OCI-LY7 (cell line): ENCODE measurements at regions of chr4 and their contacts with region 1.

Region 1: GRCh38 chr4:165112368-165113139 is at the start of gene TMEM192:
- DNase-seq: peak; percentile 90
- H3K4me3 ChIP-seq: peak within 1 kb of the TSS; percentile 80
- H3K27ac ChIP-seq: peak within 1 kb of the TSS; percentile 34
- H3K4me1 ChIP-seq: peaks cover 12% of the 10 kb centered on the region
- CTCF ChIP-seq: peak; percentile 54
- total RNA-seq, gene TMEM192: 5.9 and 6.6 TPM in 2 replicates

Region 2: GRCh38 chr4:164828955-164829354 is 283.6 kb before region 1 on chr4:
- CTCF ChIA-PET with region 1: no interaction called
- POLR2A ChIA-PET with region 1: no interaction called
- intact Hi-C with region 1: no loop called
- DNase-seq: no peak
- H3K4me3 ChIP-seq: no peak overlapping the region
- H3K27ac ChIP-seq: no peak overlapping the region
- H3K4me1 ChIP-seq: no peaks in the 10 kb centered on the region
- CTCF ChIP-seq: no peak

Region 3: DNA sequence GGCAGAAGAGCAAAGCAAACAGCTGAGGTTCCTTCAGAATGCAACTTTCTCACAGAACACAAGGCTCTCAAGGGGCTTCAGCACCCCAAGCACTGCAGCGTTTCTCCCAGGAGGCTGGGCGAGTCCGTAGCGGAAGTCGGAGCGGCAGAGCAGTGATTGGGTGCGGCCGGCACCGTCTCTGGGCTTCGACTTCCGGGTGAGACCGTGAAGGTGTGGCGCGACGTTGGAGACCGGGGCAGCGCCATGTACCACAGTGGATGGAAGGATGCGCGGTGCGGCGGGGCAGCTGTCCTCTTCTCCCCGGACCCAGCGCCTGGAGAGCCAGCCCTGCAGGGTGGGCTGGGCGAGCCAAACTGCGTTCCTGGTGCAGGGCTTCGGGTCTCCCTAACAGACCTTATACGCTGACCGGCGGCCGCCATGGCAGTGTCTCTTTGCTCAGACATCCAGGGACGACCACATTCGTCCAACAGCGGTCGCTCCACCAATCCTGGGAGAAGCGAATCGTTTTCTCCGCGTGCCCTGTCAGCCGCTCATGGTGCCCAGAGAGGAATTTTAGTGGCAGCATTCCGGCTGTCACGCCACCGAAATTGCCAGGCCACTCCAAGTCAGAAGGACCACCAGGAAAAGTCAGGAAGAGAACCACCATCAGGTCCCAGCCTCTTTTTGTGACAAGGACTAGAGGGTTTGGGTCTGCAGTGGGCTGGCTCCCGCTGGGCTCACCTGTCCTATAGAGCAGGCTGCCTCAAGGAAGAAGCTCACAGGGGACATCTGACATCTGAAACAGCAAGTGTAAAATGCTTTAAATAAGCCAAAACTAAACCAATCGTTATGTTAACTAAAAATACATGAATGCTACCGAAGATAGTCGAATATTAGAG is 155.5 kb before region 1 on chr4:
- CTCF ChIA-PET with region 1: no interaction called
- POLR2A ChIA-PET with region 1: no interaction called
- intact Hi-C with region 1: loop called (anchors 5 kb)
- DNase-seq: peak; percentile 93
- H3K4me3 ChIP-seq: peak overlapping the region; percentile 86
- H3K27ac ChIP-seq: peak overlapping the region; percentile 56
- H3K4me1 ChIP-seq: peaks cover 35% of the 10 kb centered on the region
- CTCF ChIP-seq: peak; percentile 24; the same call in 1 of the 2 replicates

Region 4: GRCh38 chr4:164977243-164978164 is 135.1 kb before region 1 on chr4 and contains the start of gene TRIM61:
- CTCF ChIA-PET with region 1: no interaction called
- POLR2A ChIA-PET with region 1: interaction called, 5 read pairs
- intact Hi-C with region 1: loop called (anchors 5 kb)
- DNase-seq: peak; percentile 91
- H3K4me3 ChIP-seq: peak within 1 kb of the TSS; percentile 80
- H3K27ac ChIP-seq: peak within 1 kb of the TSS; percentile 4
- H3K4me1 ChIP-seq: peaks cover 11% of the 10 kb centered on the region
- CTCF ChIP-seq: peak; percentile 77
- total RNA-seq, gene TRIM61: 2.8 and 3.1 TPM in 2 replicates

Region 5: GRCh38 chr4:165031436-165032205 is 80.9 kb before region 1 on chr4 and contains the start of gene TRIM60:
- CTCF ChIA-PET with region 1: no interaction called
- POLR2A ChIA-PET with region 1: no interaction called
- intact Hi-C with region 1: no loop called
- DNase-seq: no peak
- H3K4me3 ChIP-seq: no peak within 1 kb of the TSS
- H3K27ac ChIP-seq: no peak within 1 kb of the TSS
- H3K4me1 ChIP-seq: no peaks in the 10 kb centered on the region
- CTCF ChIP-seq: no peak
- total RNA-seq, gene TRIM60: not detected in 2 replicates

Region 6: DNA sequence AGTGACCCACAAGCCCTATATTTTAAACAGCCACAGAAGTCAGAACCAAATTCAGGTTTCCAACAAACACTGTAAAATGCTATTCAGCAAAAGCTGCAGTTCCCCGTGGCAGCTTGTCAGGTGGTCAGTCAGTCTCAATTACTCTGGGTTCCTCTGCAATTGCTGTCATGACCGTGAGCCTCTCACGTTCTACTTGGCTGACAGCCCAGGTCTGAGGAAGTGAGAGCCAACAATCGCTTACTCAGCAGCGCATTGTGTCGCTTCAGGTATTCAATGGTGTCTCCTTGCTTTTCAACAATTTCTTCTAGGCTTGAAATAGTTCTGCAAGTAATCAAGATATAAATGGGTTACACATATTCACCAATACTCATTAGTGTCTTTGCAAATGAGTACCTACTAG is 33.1 kb before region 1 on chr4:
- CTCF ChIA-PET with region 1: interaction called, 12 read pairs
- POLR2A ChIA-PET with region 1: interaction called, 3 read pairs
- intact Hi-C with region 1: no loop called
- DNase-seq: no peak
- H3K4me3 ChIP-seq: no peak overlapping the region
- H3K27ac ChIP-seq: no peak overlapping the region
- H3K4me1 ChIP-seq: no peaks in the 10 kb centered on the region
- CTCF ChIP-seq: no peak

Region 7: GRCh38 chr4:165096776-165097175 is 15.8 kb before region 1 on chr4:
- CTCF ChIA-PET with region 1: interaction called, 7 read pairs
- POLR2A ChIA-PET with region 1: interaction called, 4 read pairs
- intact Hi-C with region 1: loop called (anchors 2 kb)
- DNase-seq: peak; percentile 16
- H3K4me3 ChIP-seq: no peak overlapping the region
- H3K27ac ChIP-seq: no peak overlapping the region
- H3K4me1 ChIP-seq: no peaks in the 10 kb centered on the region
- CTCF ChIP-seq: peak; percentile 78

Region 8: DNA sequence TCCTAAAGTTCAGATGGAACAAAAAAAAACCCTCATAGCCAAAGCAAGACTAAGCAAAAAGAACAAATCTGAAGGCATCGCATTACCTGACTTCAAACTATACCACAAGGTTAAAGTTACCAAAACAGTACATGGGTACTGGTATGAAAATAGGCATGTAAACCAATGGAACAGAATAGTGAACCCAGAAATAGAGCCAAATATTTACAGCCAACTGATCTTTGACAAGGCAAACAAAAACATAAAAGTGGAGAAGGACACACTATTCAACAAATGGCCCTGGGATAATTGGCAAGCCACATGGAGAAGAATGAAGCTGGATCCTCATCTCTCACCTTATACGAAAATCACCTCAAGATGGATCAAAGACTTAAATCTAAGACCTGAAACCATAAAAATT is 44.4 kb after region 1 on chr4:
- CTCF ChIA-PET with region 1: no interaction called
- POLR2A ChIA-PET with region 1: no interaction called
- intact Hi-C with region 1: no loop called
- DNase-seq: no peak
- H3K4me3 ChIP-seq: no peak overlapping the region
- H3K27ac ChIP-seq: no peak overlapping the region
- H3K4me1 ChIP-seq: no peaks in the 10 kb centered on the region
- CTCF ChIP-seq: no peak

Region 9: GRCh38 chr4:165327211-165328100 is 214.9 kb after region 1 on chr4 and contains the start of gene MSMO1:
- CTCF ChIA-PET with region 1: no interaction called
- POLR2A ChIA-PET with region 1: no interaction called
- intact Hi-C with region 1: loop called (anchors 2 kb)
- DNase-seq: peak; percentile 99
- H3K4me3 ChIP-seq: peak within 1 kb of the TSS; percentile 90
- H3K27ac ChIP-seq: peak within 1 kb of the TSS; percentile 73
- H3K4me1 ChIP-seq: peaks cover 46% of the 10 kb centered on the region
- CTCF ChIP-seq: no peak
- total RNA-seq, gene MSMO1: 36.3 and 41.6 TPM in 2 replicates

Region 10: GRCh38 chr4:165464813-165465381 is 352.3 kb after region 1 on chr4:
- CTCF ChIA-PET with region 1: interaction called, 5 read pairs
- POLR2A ChIA-PET with region 1: no interaction called
- intact Hi-C with region 1: loop called (anchors 5 kb)
- DNase-seq: peak; percentile 55
- H3K4me3 ChIP-seq: no peak overlapping the region
- H3K27ac ChIP-seq: no peak overlapping the region
- H3K4me1 ChIP-seq: no peaks in the 10 kb centered on the region
- CTCF ChIP-seq: peak; percentile 98